HepG2 (cell line): ENCODE measurements at regions of chr16 and their contacts with region 1.

Region 1: GRCh38 chr16:4358831-4359561 is 7.9 kb upstream of the PAM16 start:
- DNase-seq: peak; percentile 53
- ATAC-seq: peak; percentile 80
- H3K4me3 ChIP-seq: no peak overlapping the region; a peak in 1 of 6 replicates
- H3K27ac ChIP-seq: no peak overlapping the region
- H3K4me1 ChIP-seq: peaks cover 17% of the 10 kb centered on the region
- H3K27me3 ChIP-seq: no peaks in the 10 kb centered on the region; a peak in 1 of 5 replicates
- CTCF ChIP-seq: peak; percentile 98
- EP300 ChIP-seq: no peak
- POLR2A ChIP-seq: no peak
- RAD21 ChIP-seq: peak; percentile 96

Region 2: DNA sequence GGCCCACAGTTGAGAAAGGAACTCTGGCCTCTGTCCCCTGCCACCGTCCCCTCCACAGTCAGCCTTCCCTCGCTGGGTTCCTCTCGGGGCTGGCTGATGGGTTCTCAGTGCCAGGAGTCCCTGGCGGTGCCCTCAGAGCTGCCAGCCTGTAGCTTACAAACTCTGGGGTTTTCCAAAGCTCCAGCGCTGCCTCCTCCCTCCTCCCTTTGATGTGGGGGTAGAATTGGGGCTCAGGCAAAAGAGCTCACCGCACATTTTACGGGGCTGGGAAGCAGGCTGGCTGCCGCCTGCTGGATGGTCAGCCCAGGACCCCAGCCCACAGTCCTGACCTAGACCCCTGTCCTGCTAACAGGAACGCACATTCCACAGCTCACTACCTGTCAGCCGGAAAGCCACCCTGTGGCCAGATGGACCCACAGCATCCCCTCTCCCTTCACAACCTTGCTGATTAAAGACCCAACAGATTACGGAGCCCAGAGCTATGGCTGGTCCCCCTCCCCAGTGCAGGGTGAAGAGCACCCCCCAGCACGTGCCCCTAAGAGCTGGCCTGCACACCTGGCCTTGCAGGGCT is 18.7 kb after region 1 on chr16:
- CTCF ChIA-PET with region 1: interaction called, 10 read pairs
- POLR2A ChIA-PET with region 1: interaction called, 9 read pairs
- in situ Hi-C with region 1: no loop called
- intact Hi-C with region 1: loop called (anchors 1 kb)
- DNase-seq: no peak
- ATAC-seq: peak; percentile 13; the same call in 2 of the 3 replicates
- H3K4me3 ChIP-seq: no peak overlapping the region; a peak in 1 of 6 replicates
- H3K27ac ChIP-seq: peak overlapping the region; percentile 52
- H3K4me1 ChIP-seq: peaks cover 77% of the 10 kb centered on the region
- H3K27me3 ChIP-seq: no peaks in the 10 kb centered on the region
- CTCF ChIP-seq: peak; percentile 49
- EP300 ChIP-seq: no peak
- POLR2A ChIP-seq: no peak
- RAD21 ChIP-seq: peak; percentile 18; the same call in 1 of the 2 replicates

Region 3: DNA sequence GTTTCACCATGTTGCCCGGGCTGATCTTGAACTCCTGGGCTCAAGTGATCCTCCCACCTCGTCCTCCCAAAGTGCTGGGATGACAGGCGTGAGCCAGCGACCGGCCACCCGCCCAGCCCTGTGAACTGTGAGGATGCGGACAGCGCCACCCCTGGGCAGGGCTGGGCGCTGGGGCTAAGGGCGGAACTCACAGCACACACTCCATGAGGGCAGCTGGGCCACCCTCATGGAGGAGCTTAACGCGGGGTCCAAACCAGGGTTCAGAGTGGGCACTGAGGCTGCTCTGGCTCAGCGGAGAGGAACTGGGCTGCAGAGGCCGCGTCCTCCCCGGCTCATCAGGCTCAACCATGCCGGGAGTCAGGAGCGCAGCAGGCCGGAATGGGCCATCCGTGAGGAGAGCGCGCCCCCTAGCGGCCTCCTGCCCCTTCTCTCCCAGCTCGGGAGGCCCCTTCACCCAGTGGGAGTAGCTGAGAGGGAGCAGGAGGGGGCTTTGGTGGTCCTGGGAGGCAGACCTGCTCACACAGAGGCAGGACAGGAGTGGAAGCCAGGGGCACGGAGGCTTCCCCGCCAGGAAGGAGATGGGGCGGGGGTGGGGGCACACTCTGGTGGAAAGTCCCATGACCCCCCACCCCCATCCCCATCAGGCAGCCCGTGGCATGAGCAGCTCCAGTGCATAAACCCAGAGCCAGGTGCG is 43.6 kb after region 1 on chr16:
- CTCF ChIA-PET with region 1: interaction called, 92 read pairs
- POLR2A ChIA-PET with region 1: interaction called, 3 read pairs
- in situ Hi-C with region 1: no loop called
- intact Hi-C with region 1: loop called (anchors 1 kb)
- DNase-seq: peak; percentile 45
- ATAC-seq: peak; percentile 90
- H3K4me3 ChIP-seq: peak overlapping the region in 2 of 3 experiments; percentile 30 to 62; a peak in 2 of 6 replicates
- H3K27ac ChIP-seq: no peak overlapping the region
- H3K4me1 ChIP-seq: peaks cover 23% of the 10 kb centered on the region
- H3K27me3 ChIP-seq: no peaks in the 10 kb centered on the region
- CTCF ChIP-seq: peak; percentile 98
- EP300 ChIP-seq: no peak
- POLR2A ChIP-seq: no peak
- RAD21 ChIP-seq: peak; percentile 99